Endothelial cell of umbilical vein (primary cell): ENCODE measurements at regions of chr7 and their contacts with region 1.

Region 1: DNA sequence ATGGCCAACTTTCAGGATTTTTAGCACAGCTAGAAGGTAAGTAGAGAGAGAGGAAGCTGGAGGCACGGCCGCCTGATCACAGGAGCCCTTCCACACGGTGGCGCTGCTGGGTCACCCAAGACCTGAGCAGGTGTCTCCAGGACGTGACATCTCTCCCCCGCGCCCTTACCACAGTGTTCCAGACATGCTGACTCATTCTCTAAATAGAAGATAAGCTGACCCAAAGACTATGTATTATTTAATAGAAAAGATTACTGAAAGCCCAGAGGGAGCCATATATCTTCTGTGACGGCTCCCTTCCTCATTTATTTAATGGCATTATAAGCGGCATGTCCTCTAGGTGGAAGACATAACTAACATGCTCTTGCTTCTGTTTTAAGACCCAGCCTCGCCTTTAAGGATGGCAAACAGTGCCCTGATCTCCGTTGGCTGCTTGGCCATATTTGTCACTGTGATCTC is 26.0 kb upstream of the MALSU1 start:
- DNase-seq: peak; percentile 92
- H3K4me3 ChIP-seq: peak overlapping the region in 1 of 3 experiments; percentile 7
- H3K27ac ChIP-seq: peak overlapping the region; percentile 42
- H3K4me1 ChIP-seq: peaks cover 9% of the 10 kb centered on the region
- H3K27me3 ChIP-seq: no peaks in the 10 kb centered on the region
- CTCF ChIP-seq: peak; percentile 89 to 95
- POLR2A ChIP-seq: no peak

Region 2: DNA sequence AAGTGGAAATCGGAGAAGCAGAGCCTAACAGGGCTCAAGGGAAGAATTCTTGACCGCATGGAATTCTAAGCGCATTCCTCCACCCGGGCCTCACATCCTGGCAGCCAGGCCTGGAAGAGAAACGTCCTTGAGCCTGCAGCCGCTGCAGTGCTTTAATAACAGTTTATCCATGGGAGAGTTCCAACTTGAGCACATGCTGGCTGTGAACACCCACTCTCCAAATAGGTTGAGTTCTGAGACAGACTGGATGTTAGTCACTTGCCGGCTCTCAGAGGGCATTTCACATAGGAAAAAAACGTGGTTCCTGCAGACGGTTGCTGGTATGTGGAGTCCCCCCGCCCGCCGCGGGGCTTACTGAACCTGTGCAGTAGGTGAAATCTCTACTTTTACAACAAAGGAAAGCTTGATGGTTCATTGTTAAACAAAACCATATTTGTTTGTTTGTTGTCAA is 711.8 kb before region 1 on chr7:
- CTCF ChIA-PET with region 1: no interaction called
- POLR2A ChIA-PET with region 1: no interaction called
- dilution Hi-C with region 1: no loop called
- intact Hi-C with region 1: no loop called
- DNase-seq: peak; percentile 96
- H3K4me3 ChIP-seq: peak overlapping the region in 1 of 3 experiments; percentile 16
- H3K27ac ChIP-seq: peak overlapping the region; percentile 99
- H3K4me1 ChIP-seq: peaks cover 63% of the 10 kb centered on the region
- H3K27me3 ChIP-seq: no peaks in the 10 kb centered on the region
- CTCF ChIP-seq: no peak
- POLR2A ChIP-seq: peak; percentile 80

Region 3: GRCh38 chr7:23261843-23262452 is 11.2 kb before region 1 on chr7:
- CTCF ChIA-PET with region 1: interaction called, 55 read pairs
- POLR2A ChIA-PET with region 1: no interaction called
- dilution Hi-C with region 1: no loop called
- intact Hi-C with region 1: no loop called
- DNase-seq: peak; percentile 69
- H3K4me3 ChIP-seq: no peak overlapping the region
- H3K27ac ChIP-seq: no peak overlapping the region
- H3K4me1 ChIP-seq: no peaks in the 10 kb centered on the region
- H3K27me3 ChIP-seq: peaks cover 5 to 14% of the 10 kb centered on the region in 2 experiments
- CTCF ChIP-seq: peak; percentile 87 to 93
- POLR2A ChIP-seq: no peak

Region 4: DNA sequence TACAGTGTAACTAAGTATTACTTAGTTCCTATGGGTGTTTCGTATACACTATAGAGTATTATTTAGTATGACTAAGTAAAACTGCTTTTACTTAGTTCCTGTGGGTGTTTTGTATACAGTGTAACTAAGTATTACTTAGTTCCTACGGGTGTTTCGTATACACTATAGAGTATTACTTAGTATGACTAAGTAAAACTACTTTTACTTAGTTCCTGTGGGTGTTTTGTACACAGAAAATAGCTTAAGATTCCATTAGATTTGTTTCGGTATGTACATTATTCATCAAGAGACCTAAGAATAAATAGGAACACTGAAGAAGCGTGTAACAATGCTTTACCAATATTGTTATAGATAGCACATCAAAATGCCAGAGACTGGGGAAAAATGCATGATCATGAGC is 172.2 kb after region 1 on chr7:
- CTCF ChIA-PET with region 1: interaction called, 11 read pairs
- POLR2A ChIA-PET with region 1: no interaction called
- dilution Hi-C with region 1: no loop called
- intact Hi-C with region 1: no loop called
- DNase-seq: no peak
- H3K4me3 ChIP-seq: no peak overlapping the region
- H3K27ac ChIP-seq: no peak overlapping the region
- H3K4me1 ChIP-seq: no peaks in the 10 kb centered on the region
- H3K27me3 ChIP-seq: no peaks in the 10 kb centered on the region
- CTCF ChIP-seq: no peak
- POLR2A ChIP-seq: no peak

Region 5: GRCh38 chr7:23490357-23491135 is 217.4 kb after region 1 on chr7:
- CTCF ChIA-PET with region 1: interaction called, 8 read pairs
- POLR2A ChIA-PET with region 1: no interaction called
- dilution Hi-C with region 1: no loop called
- intact Hi-C with region 1: loop called (anchors 1 kb)
- DNase-seq: peak; percentile 48
- H3K4me3 ChIP-seq: peak overlapping the region; percentile 6 to 58 (median 45)
- H3K27ac ChIP-seq: peak overlapping the region; percentile 56
- H3K4me1 ChIP-seq: peaks cover 2% of the 10 kb centered on the region
- H3K27me3 ChIP-seq: no peaks in the 10 kb centered on the region
- CTCF ChIP-seq: no peak
- POLR2A ChIP-seq: peak; percentile 47

Region 6: DNA sequence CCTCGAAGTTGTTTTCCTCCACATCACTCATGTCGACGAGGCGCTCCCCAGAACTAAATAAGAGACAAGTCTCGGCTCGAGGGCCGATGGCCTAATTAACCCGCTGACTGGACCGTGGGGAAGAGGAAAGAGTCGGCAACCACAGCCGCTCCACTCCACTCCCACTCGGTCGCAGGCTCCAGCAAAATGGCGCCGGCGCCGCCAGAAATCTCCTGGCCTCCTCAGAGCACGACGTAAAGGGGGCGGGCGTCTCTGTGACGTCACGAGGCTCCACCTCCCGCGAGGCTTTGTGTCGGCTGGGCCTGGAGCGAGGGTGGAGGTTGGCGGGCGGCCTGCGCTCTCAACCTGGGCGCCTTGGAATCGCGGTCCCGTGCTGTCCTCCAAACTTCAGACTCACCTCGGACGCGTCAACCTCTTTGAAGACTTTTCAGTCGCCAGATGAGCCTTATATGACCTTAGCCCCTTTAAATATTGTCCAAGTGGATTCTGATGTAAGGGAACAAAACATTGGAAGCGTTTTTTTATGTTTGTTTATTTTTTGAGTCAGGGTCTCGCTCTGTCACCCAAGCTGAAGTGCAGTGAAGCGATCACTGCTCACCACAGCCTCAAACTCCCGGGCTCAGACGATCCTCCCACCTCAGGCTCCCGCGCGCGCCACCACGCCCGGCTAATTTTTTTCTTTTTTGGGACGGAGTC is 258.8 kb after region 1 on chr7 and contains the start of gene TRA2A:
- CTCF ChIA-PET with region 1: interaction called, 16 read pairs
- POLR2A ChIA-PET with region 1: no interaction called
- dilution Hi-C with region 1: no loop called
- intact Hi-C with region 1: loop called (anchors 1 kb)
- DNase-seq: peak; percentile 94
- H3K4me3 ChIP-seq: peak within 1 kb of the TSS; percentile 83 to 99 (median 88)
- H3K27ac ChIP-seq: peak within 1 kb of the TSS; percentile 100
- H3K4me1 ChIP-seq: peaks cover 30% of the 10 kb centered on the region
- H3K27me3 ChIP-seq: no peaks in the 10 kb centered on the region
- CTCF ChIP-seq: no peak
- POLR2A ChIP-seq: peak; percentile 99
- total RNA-seq, gene TRA2A: 105 and 112 TPM in 2 replicates

Region 7: DNA sequence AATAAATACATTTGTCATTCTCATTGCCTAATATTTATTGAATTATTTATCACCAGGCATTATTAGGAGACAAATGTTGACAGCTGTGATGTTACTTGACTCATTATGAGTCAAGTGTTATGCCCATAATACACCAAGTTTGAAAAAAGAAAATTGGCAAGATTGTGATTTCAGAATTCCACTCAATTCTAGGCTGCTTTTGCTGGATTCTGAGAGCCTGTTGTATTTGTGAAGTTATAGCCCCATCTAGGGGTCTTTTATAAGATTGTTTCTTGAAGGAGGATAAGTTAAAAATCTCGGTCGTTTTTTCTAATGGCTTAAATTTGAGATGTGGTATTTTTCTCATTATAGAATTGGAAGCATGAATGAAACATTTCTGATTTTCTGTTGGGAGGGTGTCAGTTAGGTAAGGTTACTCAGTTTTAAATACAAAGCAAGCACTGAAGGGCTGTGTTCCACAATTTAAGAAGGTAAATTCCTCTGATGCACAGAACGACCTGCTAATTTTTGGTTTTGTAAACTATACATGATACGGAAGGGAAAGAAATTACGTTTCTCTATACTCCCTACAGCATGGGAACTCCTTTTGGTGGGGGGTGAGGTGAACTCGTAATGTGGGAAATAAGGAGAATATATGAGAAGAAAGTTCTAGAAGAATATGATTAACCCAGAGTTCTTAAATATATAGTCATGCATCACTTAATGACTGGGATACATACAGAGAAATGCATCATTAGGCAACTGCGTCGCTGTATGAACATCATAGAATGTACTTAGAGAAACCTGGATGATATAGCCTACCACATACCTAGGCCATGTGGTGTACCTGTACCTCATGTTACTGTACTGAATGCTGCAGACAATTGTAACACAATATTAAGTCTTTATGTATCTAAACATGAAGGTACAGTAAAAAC is 439.5 kb after region 1 on chr7:
- CTCF ChIA-PET with region 1: interaction called, 3 read pairs
- POLR2A ChIA-PET with region 1: no interaction called
- dilution Hi-C with region 1: no loop called
- intact Hi-C with region 1: loop called (anchors 2 kb)
- DNase-seq: peak; percentile 58
- H3K4me3 ChIP-seq: no peak overlapping the region
- H3K27ac ChIP-seq: no peak overlapping the region
- H3K4me1 ChIP-seq: no peaks in the 10 kb centered on the region
- H3K27me3 ChIP-seq: no peaks in the 10 kb centered on the region
- CTCF ChIP-seq: peak; percentile 20 to 40
- POLR2A ChIP-seq: no peak